ENCODE measurements at regions of chr12 and their contacts with region 1.

Region 1: DNA sequence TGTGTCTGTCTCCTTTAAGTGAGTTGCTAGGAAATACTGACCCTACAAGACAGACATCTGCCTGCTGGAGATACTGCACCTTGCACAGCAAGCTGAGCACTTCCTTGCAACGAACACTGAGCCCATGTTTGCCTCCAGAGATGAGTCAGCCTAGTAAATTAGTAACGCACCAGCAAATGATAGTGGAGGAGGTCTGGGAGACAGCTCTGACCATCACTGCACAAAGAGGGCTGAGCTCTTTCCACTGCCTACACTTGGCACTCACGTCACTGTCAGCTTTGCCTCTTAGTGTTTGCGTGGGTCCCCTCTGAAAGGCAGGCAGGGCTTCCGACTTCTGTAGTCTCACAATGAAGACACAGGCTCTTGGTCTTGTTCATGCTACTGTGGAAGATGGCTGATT is 109.0 kb downstream of the APAF1 start:
- DNase-seq: peak; percentile 85
- ATAC-seq: peak; percentile 99
- H3K4me3 ChIP-seq: no peak overlapping the region
- H3K27ac ChIP-seq: no peak overlapping the region; the same call in 1 of the 2 replicates
- H3K4me1 ChIP-seq: peaks cover 5% of the 10 kb centered on the region
- H3K27me3 ChIP-seq: no peaks in the 10 kb centered on the region
- CTCF ChIP-seq: no peak
- EP300 ChIP-seq: peak; percentile 68 to 69; a peak in 3 of 4 replicates
- POLR2A ChIP-seq: no peak
- RAD21 ChIP-seq: no peak

Region 2: DNA sequence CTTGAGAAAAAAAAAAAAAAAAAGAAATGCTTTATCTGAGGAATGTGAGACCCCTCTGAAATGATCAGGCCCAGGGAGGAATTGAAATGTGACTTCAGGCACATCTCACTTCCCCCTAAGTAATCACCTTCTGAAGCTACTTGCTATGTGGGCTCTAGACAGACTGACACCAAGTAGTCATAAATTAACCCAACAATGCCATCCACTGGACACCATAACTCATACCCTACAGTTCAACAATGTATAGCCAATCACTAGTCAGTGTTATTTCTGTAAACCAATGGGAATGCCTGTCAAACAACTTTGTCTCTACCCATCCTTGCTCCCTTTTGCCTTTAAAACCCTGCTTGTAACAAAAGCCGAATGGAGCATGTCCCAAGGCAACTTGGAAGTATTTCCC is 421.5 kb before region 1 on chr12:
- CTCF ChIA-PET with region 1: no interaction called
- POLR2A ChIA-PET with region 1: no interaction called
- RAD21 ChIA-PET with region 1: no interaction called
- SMC1A ChIA-PET with region 1: no interaction called
- in situ Hi-C with region 1: no loop called
- intact Hi-C with region 1: no loop called
- DNase-seq: peak; percentile 64
- ATAC-seq: peak; percentile 91
- H3K4me3 ChIP-seq: no peak overlapping the region
- H3K27ac ChIP-seq: no peak overlapping the region
- H3K4me1 ChIP-seq: no peaks in the 10 kb centered on the region
- H3K27me3 ChIP-seq: peaks cover 0 to 3% of the 10 kb centered on the region in 2 experiments; a peak in 1 of 4 replicates
- CTCF ChIP-seq: peak; percentile 12 to 57 (median 18); a peak in 3 of 6 replicates
- EP300 ChIP-seq: peak in 1 of 2 experiments; percentile 8; a peak in 1 of 4 replicates
- POLR2A ChIP-seq: no peak
- RAD21 ChIP-seq: no peak

Region 3: GRCh38 chr12:98719515-98720504 is 34.3 kb before region 1 on chr12:
- CTCF ChIA-PET with region 1: interaction called, 4 read pairs
- POLR2A ChIA-PET with region 1: interaction called, 3 read pairs
- RAD21 ChIA-PET with region 1: interaction called, 5 read pairs
- SMC1A ChIA-PET with region 1: interaction called, 27 read pairs
- in situ Hi-C with region 1: no loop called
- intact Hi-C with region 1: no loop called
- DNase-seq: no peak
- ATAC-seq: peak; percentile 51
- H3K4me3 ChIP-seq: 0 out of 2 replicates have a peak overlapping the region, but pooled peaks have one; percentile 10
- H3K27ac ChIP-seq: peak overlapping the region; percentile 60
- H3K4me1 ChIP-seq: peaks cover 4% of the 10 kb centered on the region
- H3K27me3 ChIP-seq: no peaks in the 10 kb centered on the region
- CTCF ChIP-seq: no peak
- EP300 ChIP-seq: no peak
- POLR2A ChIP-seq: no peak
- RAD21 ChIP-seq: no peak

Region 4: GRCh38 chr12:98743347-98743953 is 10.6 kb before region 1 on chr12:
- CTCF ChIA-PET with region 1: interaction called, 6 read pairs
- POLR2A ChIA-PET with region 1: no interaction called
- RAD21 ChIA-PET with region 1: interaction called, 3 read pairs
- SMC1A ChIA-PET with region 1: interaction called, 29 read pairs
- in situ Hi-C with region 1: no loop called
- intact Hi-C with region 1: no loop called
- DNase-seq: no peak
- ATAC-seq: peak; percentile 90
- H3K4me3 ChIP-seq: no peak overlapping the region
- H3K27ac ChIP-seq: no peak overlapping the region
- H3K4me1 ChIP-seq: peaks cover 4% of the 10 kb centered on the region; the same call in 1 of the 2 replicates
- H3K27me3 ChIP-seq: peaks cover 3 to 7% of the 10 kb centered on the region in 2 experiments; a peak in 3 of 4 replicates
- CTCF ChIP-seq: peak; percentile 55 to 81 (median 71)
- EP300 ChIP-seq: no peak
- POLR2A ChIP-seq: no peak
- RAD21 ChIP-seq: peak; percentile 46

Region 5: GRCh38 chr12:100675432-100675831 is 1921.3 kb after region 1 on chr12:
- CTCF ChIA-PET with region 1: no interaction called
- POLR2A ChIA-PET with region 1: no interaction called
- RAD21 ChIA-PET with region 1: no interaction called
- SMC1A ChIA-PET with region 1: no interaction called
- in situ Hi-C with region 1: no loop called
- intact Hi-C with region 1: no loop called
- DNase-seq: no peak
- ATAC-seq: no peak
- H3K4me3 ChIP-seq: no peak overlapping the region
- H3K27ac ChIP-seq: no peak overlapping the region
- H3K4me1 ChIP-seq: no peaks in the 10 kb centered on the region
- H3K27me3 ChIP-seq: no peaks in the 10 kb centered on the region; a peak in 2 of 4 replicates
- CTCF ChIP-seq: no peak
- EP300 ChIP-seq: no peak
- POLR2A ChIP-seq: no peak
- RAD21 ChIP-seq: no peak